ENCODE measurements at regions of chr3 and their contacts with region 1.

Region 1: GRCh38 chr3:124552239-124552638 is 178.0 kb upstream of the UMPS start:
- DNase-seq: peak; percentile 97
- ATAC-seq: peak; percentile 65
- H3K4me3 ChIP-seq: no peak overlapping the region
- H3K27ac ChIP-seq: no peak overlapping the region
- H3K4me1 ChIP-seq: peaks cover 19% of the 10 kb centered on the region
- H3K27me3 ChIP-seq: peaks cover 7% of the 10 kb centered on the region; the same call in 1 of the 2 replicates
- CTCF ChIP-seq: no peak

Region 2: DNA sequence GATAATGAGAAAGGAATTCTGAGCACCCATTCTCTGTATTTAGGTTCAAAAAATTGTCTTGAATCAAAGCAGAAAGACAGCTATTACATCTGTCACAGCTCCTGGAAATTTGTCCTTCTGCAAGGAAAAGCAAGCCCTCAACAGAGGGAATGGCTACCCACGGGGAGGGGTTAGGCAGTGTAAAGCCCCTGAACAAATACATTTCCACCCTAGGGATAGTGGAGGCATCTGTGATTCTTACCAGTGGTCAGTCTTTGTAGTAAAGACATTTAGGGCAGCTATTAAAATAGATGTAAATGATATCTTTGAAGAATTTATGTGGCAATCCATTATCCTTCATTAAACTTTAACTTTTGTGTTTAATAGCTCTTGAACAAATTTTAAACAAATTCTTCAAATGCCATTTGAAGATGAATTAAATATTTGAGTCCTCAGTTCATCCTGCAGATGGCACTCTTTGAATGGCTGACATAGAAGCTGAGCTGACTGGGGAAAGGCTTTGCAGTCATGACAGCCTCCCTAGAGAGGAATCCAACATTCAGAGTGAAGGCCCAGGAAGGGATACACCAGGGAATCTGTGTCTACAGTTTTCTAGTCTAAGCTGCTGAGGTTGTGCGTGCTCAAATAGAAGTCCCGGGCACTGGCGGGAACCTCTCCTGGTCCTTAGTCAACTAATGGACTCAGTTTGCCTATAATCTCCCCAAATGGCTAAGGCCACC is 200.7 kb before region 1 on chr3:
- CTCF ChIA-PET with region 1: interaction called, 3 read pairs
- POLR2A ChIA-PET with region 1: interaction called, 3 read pairs
- intact Hi-C with region 1: loop called (anchors 1 kb)
- DNase-seq: peak; percentile 84
- ATAC-seq: peak; percentile 91
- H3K4me3 ChIP-seq: no peak overlapping the region
- H3K27ac ChIP-seq: no peak overlapping the region
- H3K4me1 ChIP-seq: no peaks in the 10 kb centered on the region
- H3K27me3 ChIP-seq: peaks cover 9% of the 10 kb centered on the region; the same call in 1 of the 2 replicates
- CTCF ChIP-seq: peak; percentile 95

Region 3: DNA sequence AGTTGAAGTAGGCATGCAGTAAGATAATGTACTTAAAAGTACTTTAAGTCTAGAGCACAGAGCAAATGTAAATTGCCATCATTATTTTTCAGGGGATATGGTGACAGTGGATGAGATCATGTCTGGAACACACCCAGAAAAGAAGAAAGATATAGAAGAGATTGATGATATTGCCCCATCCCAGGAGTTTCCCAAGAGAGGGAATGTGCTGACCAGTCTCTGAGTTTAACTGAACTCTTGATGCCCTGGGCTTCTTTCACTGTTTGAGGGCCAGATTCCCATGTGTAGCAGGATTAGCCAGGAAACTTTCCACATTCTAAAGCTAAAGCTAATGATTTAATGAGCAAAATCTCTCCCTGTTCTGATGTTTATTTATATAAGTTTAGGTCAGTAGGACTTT is 188.8 kb before region 1 on chr3:
- CTCF ChIA-PET with region 1: no interaction called
- POLR2A ChIA-PET with region 1: no interaction called
- intact Hi-C with region 1: no loop called
- DNase-seq: peak; percentile 56
- ATAC-seq: no peak
- H3K4me3 ChIP-seq: no peak overlapping the region
- H3K27ac ChIP-seq: no peak overlapping the region
- H3K4me1 ChIP-seq: peaks cover 6% of the 10 kb centered on the region; the same call in 1 of the 2 replicates
- H3K27me3 ChIP-seq: no peaks in the 10 kb centered on the region
- CTCF ChIP-seq: no peak

Region 4: GRCh38 chr3:124492811-124493210 is 59.4 kb before region 1 on chr3:
- CTCF ChIA-PET with region 1: no interaction called
- POLR2A ChIA-PET with region 1: no interaction called
- intact Hi-C with region 1: loop called (anchors 1 kb)
- DNase-seq: peak; percentile 94
- ATAC-seq: peak; percentile 97
- H3K4me3 ChIP-seq: no peak overlapping the region
- H3K27ac ChIP-seq: no peak overlapping the region
- H3K4me1 ChIP-seq: peaks cover 6% of the 10 kb centered on the region; the same call in 1 of the 2 replicates
- H3K27me3 ChIP-seq: 0 out of 2 replicates have a peak, but pooled peaks cover 3% of the 10 kb centered on the region
- CTCF ChIP-seq: peak; percentile 95

Region 5: GRCh38 chr3:124512881-124513609 is 39.2 kb before region 1 on chr3:
- CTCF ChIA-PET with region 1: no interaction called
- POLR2A ChIA-PET with region 1: no interaction called
- intact Hi-C with region 1: no loop called
- DNase-seq: peak; percentile 37
- ATAC-seq: no peak
- H3K4me3 ChIP-seq: no peak overlapping the region
- H3K27ac ChIP-seq: no peak overlapping the region
- H3K4me1 ChIP-seq: peaks cover 20% of the 10 kb centered on the region
- H3K27me3 ChIP-seq: no peaks in the 10 kb centered on the region
- CTCF ChIP-seq: peak; percentile 29; the same call in 1 of the 2 replicates